ENCODE measurements at regions of chr17 and their contacts with region 1.

Region 1: GRCh38 chr17:50865984-50866774 is at the start of gene TOB1:
- DNase-seq: peak; percentile 93 to 98 (median 97)
- ATAC-seq: peak; percentile 59
- H3K4me3 ChIP-seq: peak within 1 kb of the TSS; percentile 92
- H3K4me3 Mint-ChIP-seq: peak within 1 kb of the TSS; percentile 98
- H3K27ac ChIP-seq: peak within 1 kb of the TSS; percentile 92 to 98
- H3K27ac Mint-ChIP-seq: peak within 1 kb of the TSS; percentile 98
- H3K4me1 ChIP-seq: peaks cover 38% of the 10 kb centered on the region
- H3K4me1 Mint-ChIP-seq: peaks cover 68% of the 10 kb centered on the region
- H3K27me3 ChIP-seq: no peaks in the 10 kb centered on the region
- H3K27me3 Mint-ChIP-seq: peaks cover 5% of the 10 kb centered on the region
- CTCF ChIP-seq: no peak
- total RNA-seq, gene TOB1: 419 to 449 TPM

Region 2: GRCh38 chr17:50719144-50719923 is 146.8 kb before region 1 on chr17 and contains the start of gene LUC7L3:
- CTCF ChIA-PET with region 1: no interaction called
- POLR2A ChIA-PET with region 1: interaction called, 22 read pairs
- intact Hi-C with region 1: no loop called
- DNase-seq: peak; percentile 84 to 96 (median 90)
- ATAC-seq: peak; percentile 91
- H3K4me3 ChIP-seq: peak within 1 kb of the TSS; percentile 79
- H3K4me3 Mint-ChIP-seq: peak within 1 kb of the TSS; percentile 95
- H3K27ac ChIP-seq: peak within 1 kb of the TSS; percentile 89 to 97
- H3K27ac Mint-ChIP-seq: peak within 1 kb of the TSS; percentile 86
- H3K4me1 ChIP-seq: peaks cover 27% of the 10 kb centered on the region
- H3K4me1 Mint-ChIP-seq: peaks cover 34% of the 10 kb centered on the region
- H3K27me3 ChIP-seq: no peaks in the 10 kb centered on the region
- H3K27me3 Mint-ChIP-seq: no peaks in the 10 kb centered on the region
- CTCF ChIP-seq: no peak
- total RNA-seq, gene LUC7L3: 116 to 126 TPM

Region 3: DNA sequence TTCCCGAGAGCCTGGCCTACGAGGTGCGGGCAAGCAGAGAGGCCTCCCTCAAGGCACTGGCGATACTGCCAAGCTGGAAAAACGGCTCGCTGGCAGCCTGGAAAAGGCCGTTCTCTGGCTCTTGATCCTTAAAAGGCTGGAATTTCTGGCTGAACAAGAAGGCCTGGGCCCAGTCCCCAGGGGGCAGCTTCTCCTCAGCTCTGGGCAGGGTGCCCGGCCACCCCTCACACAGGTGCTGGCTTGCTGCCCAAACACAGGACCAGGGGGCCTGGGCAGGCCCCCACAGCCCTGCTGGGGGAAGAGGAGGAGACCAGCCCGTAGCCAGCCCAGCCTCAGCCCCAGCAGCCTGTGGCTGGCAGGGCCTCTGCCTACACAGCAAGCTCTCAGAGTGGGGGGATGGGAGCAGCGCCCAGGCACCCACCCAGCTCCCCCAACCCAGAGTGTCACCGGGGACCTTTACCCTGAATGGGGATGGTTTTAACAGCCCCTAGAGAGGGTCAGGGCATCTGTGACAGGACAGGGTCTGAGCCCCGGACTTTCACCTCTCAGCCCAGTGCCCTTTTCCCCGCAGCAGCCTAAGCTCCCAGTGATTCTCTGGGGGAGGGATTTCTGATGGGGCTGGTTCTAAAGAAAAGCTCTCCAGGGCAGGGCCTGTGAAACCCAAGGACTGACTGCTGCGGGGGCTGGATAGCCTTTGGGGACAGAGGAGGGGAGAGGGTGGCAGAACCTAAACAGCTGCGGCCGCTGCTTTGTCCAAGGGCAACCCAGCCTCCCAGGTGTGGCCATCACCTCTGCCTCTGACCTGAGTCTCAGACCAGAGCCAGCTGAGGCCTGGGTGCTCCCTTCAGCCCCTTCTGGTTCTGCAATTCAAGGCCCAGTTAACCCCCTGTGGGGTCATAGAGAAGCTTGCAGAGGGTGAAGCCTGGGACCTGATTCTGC is 38.6 kb after region 1 on chr17:
- CTCF ChIA-PET with region 1: interaction called, 5 read pairs
- POLR2A ChIA-PET with region 1: interaction called, 278 read pairs
- intact Hi-C with region 1: no loop called
- DNase-seq: no peak
- ATAC-seq: no peak
- H3K4me3 ChIP-seq: no peak overlapping the region
- H3K4me3 Mint-ChIP-seq: no peak overlapping the region
- H3K27ac ChIP-seq: peak overlapping the region in 1 of 2 donors; percentile 80
- H3K27ac Mint-ChIP-seq: peak overlapping the region; percentile 86
- H3K4me1 ChIP-seq: peaks cover 84% of the 10 kb centered on the region
- H3K4me1 Mint-ChIP-seq: peaks cover 66% of the 10 kb centered on the region
- H3K27me3 ChIP-seq: no peaks in the 10 kb centered on the region
- H3K27me3 Mint-ChIP-seq: no peaks in the 10 kb centered on the region
- CTCF ChIP-seq: no peak

Region 4: GRCh38 chr17:50931144-50931908 is 65.1 kb after region 1 on chr17:
- CTCF ChIA-PET with region 1: no interaction called
- POLR2A ChIA-PET with region 1: interaction called, 115 read pairs
- intact Hi-C with region 1: loop called in 1 of 2 experiments (anchors 1 kb)
- DNase-seq: peak in 13 of 14 experiments; percentile 31 to 77 (median 40)
- ATAC-seq: peak; percentile 80
- H3K4me3 ChIP-seq: peak overlapping the region; percentile 61
- H3K4me3 Mint-ChIP-seq: peak overlapping the region; percentile 81
- H3K27ac ChIP-seq: peak overlapping the region; percentile 31 to 72
- H3K27ac Mint-ChIP-seq: peak overlapping the region; percentile 87
- H3K4me1 ChIP-seq: peaks cover 51% of the 10 kb centered on the region
- H3K4me1 Mint-ChIP-seq: peaks cover 32% of the 10 kb centered on the region
- H3K27me3 ChIP-seq: no peaks in the 10 kb centered on the region
- H3K27me3 Mint-ChIP-seq: no peaks in the 10 kb centered on the region
- CTCF ChIP-seq: no peak

Region 5: GRCh38 chr17:50956750-50957523 is 90.8 kb after region 1 on chr17:
- CTCF ChIA-PET with region 1: interaction called, 6 read pairs
- POLR2A ChIA-PET with region 1: interaction called, 207 read pairs
- intact Hi-C with region 1: loop called (anchors 2 to 5 kb)
- DNase-seq: peak; percentile 52 to 84 (median 62)
- ATAC-seq: peak; percentile 98
- H3K4me3 ChIP-seq: no peak overlapping the region
- H3K4me3 Mint-ChIP-seq: no peak overlapping the region
- H3K27ac ChIP-seq: no peak overlapping the region
- H3K27ac Mint-ChIP-seq: peak overlapping the region; percentile 28
- H3K4me1 ChIP-seq: peaks cover 9% of the 10 kb centered on the region
- H3K4me1 Mint-ChIP-seq: peaks cover 8% of the 10 kb centered on the region
- H3K27me3 ChIP-seq: no peaks in the 10 kb centered on the region
- H3K27me3 Mint-ChIP-seq: no peaks in the 10 kb centered on the region
- CTCF ChIP-seq: peak; percentile 86

Region 6: GRCh38 chr17:51260125-51260880 is 394.1 kb after region 1 on chr17 and contains the start of gene UTP18:
- CTCF ChIA-PET with region 1: no interaction called
- POLR2A ChIA-PET with region 1: interaction called, 10 read pairs
- intact Hi-C with region 1: loop called in 1 of 2 experiments (anchors 10 kb)
- DNase-seq: peak; percentile 89 to 99 (median 96)
- ATAC-seq: peak; percentile 87
- H3K4me3 ChIP-seq: peak within 1 kb of the TSS; percentile 90
- H3K4me3 Mint-ChIP-seq: peak within 1 kb of the TSS; percentile 99
- H3K27ac ChIP-seq: peak within 1 kb of the TSS; percentile 96 to 99
- H3K27ac Mint-ChIP-seq: peak within 1 kb of the TSS; percentile 99
- H3K4me1 ChIP-seq: peaks cover 36% of the 10 kb centered on the region
- H3K4me1 Mint-ChIP-seq: peaks cover 85% of the 10 kb centered on the region
- H3K27me3 ChIP-seq: no peaks in the 10 kb centered on the region
- H3K27me3 Mint-ChIP-seq: no peaks in the 10 kb centered on the region
- CTCF ChIP-seq: no peak
- total RNA-seq, gene UTP18: 48.5 to 49.8 TPM